WTC11 (cell line): ENCODE measurements at regions of chr6 and their contacts with region 1.

Region 1: DNA sequence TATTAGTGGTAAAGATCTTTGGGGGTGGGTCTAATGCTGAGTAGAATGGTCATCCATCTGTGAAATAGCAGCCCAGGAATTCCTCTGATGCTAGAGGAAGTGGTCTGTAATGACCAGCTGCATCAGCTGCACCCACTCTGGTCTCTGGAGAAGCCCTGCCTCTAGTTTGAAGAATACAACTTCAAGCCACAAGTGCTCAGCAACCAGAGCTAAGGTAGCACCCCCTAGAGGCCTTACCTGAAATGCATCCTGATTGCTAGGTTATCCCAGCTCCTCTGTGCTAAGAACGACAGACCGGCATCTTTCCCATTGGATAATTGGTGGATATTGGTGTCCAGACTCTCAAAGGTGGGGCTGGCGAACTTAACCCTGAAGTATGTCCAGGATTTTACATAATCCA is 58.2 kb downstream of the DNAH8 start:
- DNase-seq: peak; percentile 72
- ATAC-seq: peak; percentile 100
- H3K4me3 Mint-ChIP-seq: no peak overlapping the region
- H3K27ac Mint-ChIP-seq: no peak overlapping the region
- H3K4me1 Mint-ChIP-seq: peaks cover 4% of the 10 kb centered on the region
- H3K27me3 Mint-ChIP-seq: no peaks in the 10 kb centered on the region
- CTCF ChIP-seq: peak; percentile 58; the same call in 1 of the 2 replicates

Region 2: GRCh38 chr6:38762848-38763247 is 10.5 kb before region 1 on chr6:
- CTCF ChIA-PET with region 1: interaction called, 10 read pairs
- POLR2A ChIA-PET with region 1: no interaction called
- DNase-seq: no peak
- ATAC-seq: no peak
- H3K4me3 Mint-ChIP-seq: no peak overlapping the region
- H3K27ac Mint-ChIP-seq: no peak overlapping the region
- H3K4me1 Mint-ChIP-seq: peaks cover 6% of the 10 kb centered on the region
- H3K27me3 Mint-ChIP-seq: no peaks in the 10 kb centered on the region; the same call in 1 of the 2 replicates
- CTCF ChIP-seq: no peak

Region 3: GRCh38 chr6:38784506-38785235 is 11.3 kb after region 1 on chr6:
- CTCF ChIA-PET with region 1: interaction called, 14 read pairs
- POLR2A ChIA-PET with region 1: no interaction called
- DNase-seq: no peak
- ATAC-seq: no peak
- H3K4me3 Mint-ChIP-seq: no peak overlapping the region
- H3K27ac Mint-ChIP-seq: no peak overlapping the region
- H3K4me1 Mint-ChIP-seq: peaks cover 17% of the 10 kb centered on the region
- H3K27me3 Mint-ChIP-seq: no peaks in the 10 kb centered on the region
- CTCF ChIP-seq: no peak